Activated CD4-positive, alpha-beta T cell treated with anti-CD3 and anti-CD28 coated beads, Interleukin-2, amount 10 ng/mL, durations not matched to agents 24 days and 14 days (primary cell): ENCODE measurements at regions of chr2 and their contacts with region 1.

Region 1: DNA sequence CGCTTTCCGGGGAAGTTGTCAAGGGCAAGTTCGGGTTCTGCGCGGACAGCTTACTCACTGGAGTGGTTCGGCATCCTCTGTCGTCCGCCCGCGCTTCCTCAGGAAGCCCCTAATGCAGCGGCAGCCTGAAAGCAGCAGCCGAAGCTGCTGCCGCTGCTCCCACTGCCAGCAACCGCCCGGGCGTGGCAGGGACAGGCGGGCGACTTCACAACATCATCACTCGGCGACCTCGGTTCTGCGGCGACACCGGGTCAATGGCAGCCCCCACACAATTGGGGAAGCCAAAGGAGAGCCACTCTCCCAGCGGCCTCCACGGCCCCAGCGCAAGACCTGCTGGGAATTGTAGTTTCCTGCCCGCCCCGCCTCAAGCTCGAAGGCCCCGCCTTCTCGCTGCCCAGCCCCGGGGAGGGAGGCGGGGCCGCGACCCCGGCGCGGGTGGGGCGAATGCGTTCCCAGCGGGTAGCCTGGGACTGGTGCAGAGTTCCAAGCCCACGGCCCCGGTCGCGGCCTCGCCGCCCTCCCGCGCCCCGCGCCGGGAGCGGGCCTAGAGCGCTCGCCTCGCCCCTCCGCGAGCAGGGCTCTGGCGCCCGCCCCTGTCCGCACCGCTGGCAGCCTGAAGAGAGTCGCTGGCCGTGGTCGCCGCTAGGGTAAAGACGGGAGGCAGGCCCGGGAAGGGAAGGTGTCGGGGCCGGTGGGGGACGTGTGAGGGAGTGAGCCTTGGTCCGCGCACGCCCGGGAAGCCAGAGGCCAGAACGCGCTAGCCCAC is at the starts of genes STRADB and TRAK2:
- DNase-seq: peak; percentile 99
- H3K4me3 Mint-ChIP-seq: peak within 1 kb of the TSS; percentile 95
- H3K27ac Mint-ChIP-seq: peak within 1 kb of the TSS; percentile 97
- H3K4me1 Mint-ChIP-seq: peaks cover 42% of the 10 kb centered on the region
- H3K27me3 Mint-ChIP-seq: peaks cover 8% of the 10 kb centered on the region
- total RNA-seq, gene STRADB: 18.5 and 20.1 TPM in 2 replicates
- total RNA-seq, gene TRAK2: 26.5 and 29.1 TPM in 2 replicates

Region 2: GRCh38 chr2:200689115-200689514 is 762.4 kb before region 1 on chr2:
- intact Hi-C with region 1: no loop called
- DNase-seq: no peak
- H3K4me3 Mint-ChIP-seq: no peak overlapping the region
- H3K27ac Mint-ChIP-seq: no peak overlapping the region
- H3K4me1 Mint-ChIP-seq: peaks cover 6% of the 10 kb centered on the region
- H3K27me3 Mint-ChIP-seq: peaks cover 2% of the 10 kb centered on the region

Region 3: GRCh38 chr2:201130524-201131186 is 320.8 kb before region 1 on chr2:
- intact Hi-C with region 1: loop called (anchors 1 kb)
- DNase-seq: peak; percentile 80
- H3K4me3 Mint-ChIP-seq: peak overlapping the region; percentile 81
- H3K27ac Mint-ChIP-seq: peak overlapping the region; percentile 100
- H3K4me1 Mint-ChIP-seq: peaks cover 51% of the 10 kb centered on the region
- H3K27me3 Mint-ChIP-seq: no peaks in the 10 kb centered on the region

Region 4: GRCh38 chr2:201242571-201243277 is 208.8 kb before region 1 on chr2:
- intact Hi-C with region 1: no loop called
- DNase-seq: no peak
- H3K4me3 Mint-ChIP-seq: no peak overlapping the region
- H3K27ac Mint-ChIP-seq: no peak overlapping the region
- H3K4me1 Mint-ChIP-seq: peaks cover 29% of the 10 kb centered on the region
- H3K27me3 Mint-ChIP-seq: no peaks in the 10 kb centered on the region

Region 5: DNA sequence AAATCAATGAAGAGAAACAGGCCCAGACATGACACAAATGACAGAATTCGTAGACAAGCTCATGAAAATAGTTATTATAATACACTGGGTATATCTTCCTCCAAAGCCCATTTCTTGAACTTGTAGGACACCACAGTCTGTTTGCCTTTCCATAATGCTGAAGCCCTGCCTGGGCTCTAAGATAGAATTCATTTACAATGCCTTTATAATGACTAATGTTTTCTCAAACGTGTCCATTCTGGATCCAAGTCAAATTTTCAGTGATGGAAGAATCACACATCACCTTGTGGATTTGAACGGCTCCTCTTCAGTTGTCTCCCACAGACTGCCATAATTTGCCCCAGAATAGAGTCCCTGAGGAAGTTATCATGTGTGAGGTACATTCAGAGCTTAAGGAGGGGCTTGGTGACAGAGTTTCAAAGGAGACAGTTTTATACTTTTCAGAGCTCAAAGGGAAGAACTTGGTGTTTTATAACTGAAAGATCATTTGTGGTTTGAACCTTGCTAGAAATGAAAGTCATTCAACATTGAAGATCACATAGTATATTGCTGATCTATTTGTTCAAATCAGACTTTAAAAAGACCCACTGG is 152.9 kb before region 1 on chr2:
- intact Hi-C with region 1: no loop called
- DNase-seq: no peak
- H3K4me3 Mint-ChIP-seq: no peak overlapping the region
- H3K27ac Mint-ChIP-seq: no peak overlapping the region
- H3K4me1 Mint-ChIP-seq: peaks cover 4% of the 10 kb centered on the region
- H3K27me3 Mint-ChIP-seq: no peaks in the 10 kb centered on the region

Region 6: GRCh38 chr2:201414099-201415023 is 37.1 kb before region 1 on chr2:
- intact Hi-C with region 1: loop called (anchors 2 kb)
- DNase-seq: peak; percentile 64
- H3K4me3 Mint-ChIP-seq: no peak overlapping the region
- H3K27ac Mint-ChIP-seq: no peak overlapping the region
- H3K4me1 Mint-ChIP-seq: peaks cover 5% of the 10 kb centered on the region
- H3K27me3 Mint-ChIP-seq: no peaks in the 10 kb centered on the region

Region 7: DNA sequence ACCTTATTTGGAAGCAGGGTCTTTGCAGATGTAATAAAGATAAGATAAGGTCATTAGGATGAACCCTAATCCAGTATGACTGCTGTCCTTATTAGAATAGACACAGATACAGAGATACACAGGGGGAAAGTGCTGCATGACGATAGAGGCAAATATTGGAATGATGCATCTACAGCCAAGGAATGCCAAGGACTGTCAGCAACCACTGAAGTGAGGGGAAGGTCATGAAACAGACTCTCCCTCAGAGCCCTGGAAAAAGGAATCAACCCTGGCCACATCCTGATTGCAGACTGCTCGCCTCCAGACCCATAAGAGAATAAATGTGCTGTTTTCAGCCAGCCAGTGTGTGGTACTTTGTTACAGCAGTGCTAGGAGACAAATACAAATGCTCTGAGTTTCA is 177.1 kb after region 1 on chr2:
- intact Hi-C with region 1: no loop called
- DNase-seq: peak; percentile 45
- H3K4me3 Mint-ChIP-seq: no peak overlapping the region
- H3K27ac Mint-ChIP-seq: no peak overlapping the region
- H3K4me1 Mint-ChIP-seq: no peaks in the 10 kb centered on the region
- H3K27me3 Mint-ChIP-seq: no peaks in the 10 kb centered on the region

Region 8: DNA sequence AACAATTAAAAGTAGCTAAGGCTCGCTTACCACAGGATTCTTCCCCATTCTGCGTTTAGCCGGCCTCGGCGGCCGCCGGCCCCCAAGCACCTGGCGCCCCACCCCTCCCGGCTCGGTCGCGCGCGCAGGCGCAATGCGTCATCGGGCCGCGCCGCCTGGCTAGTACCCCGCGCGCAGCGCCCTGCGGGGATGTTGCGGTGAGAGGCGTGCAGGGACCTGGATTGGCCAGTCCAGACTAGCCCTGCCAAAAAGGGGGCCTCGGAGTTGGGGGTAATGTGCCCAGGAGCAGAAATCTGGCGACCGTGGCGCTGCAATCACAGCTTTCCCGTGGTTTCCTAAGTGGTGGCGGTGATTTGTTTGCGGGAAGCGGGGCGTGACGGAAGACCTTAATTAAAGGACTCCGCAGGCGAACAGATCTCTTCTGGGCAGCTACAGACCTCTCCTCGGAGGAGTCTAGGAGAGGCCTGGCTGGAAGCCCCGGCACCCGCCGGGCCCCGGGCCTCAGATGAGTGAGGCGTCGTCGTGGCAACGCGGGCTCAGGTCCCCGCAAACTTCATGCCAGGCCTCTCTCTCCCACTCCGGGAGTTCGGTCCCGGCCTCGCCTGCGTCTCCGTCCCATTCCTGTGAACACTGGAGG is 191.2 kb after region 1 on chr2:
- intact Hi-C with region 1: loop called (anchors 1 kb)
- DNase-seq: peak; percentile 97
- H3K4me3 Mint-ChIP-seq: peak overlapping the region; percentile 84
- H3K27ac Mint-ChIP-seq: peak overlapping the region; percentile 87
- H3K4me1 Mint-ChIP-seq: peaks cover 14% of the 10 kb centered on the region
- H3K27me3 Mint-ChIP-seq: peaks cover 3% of the 10 kb centered on the region

Region 9: DNA sequence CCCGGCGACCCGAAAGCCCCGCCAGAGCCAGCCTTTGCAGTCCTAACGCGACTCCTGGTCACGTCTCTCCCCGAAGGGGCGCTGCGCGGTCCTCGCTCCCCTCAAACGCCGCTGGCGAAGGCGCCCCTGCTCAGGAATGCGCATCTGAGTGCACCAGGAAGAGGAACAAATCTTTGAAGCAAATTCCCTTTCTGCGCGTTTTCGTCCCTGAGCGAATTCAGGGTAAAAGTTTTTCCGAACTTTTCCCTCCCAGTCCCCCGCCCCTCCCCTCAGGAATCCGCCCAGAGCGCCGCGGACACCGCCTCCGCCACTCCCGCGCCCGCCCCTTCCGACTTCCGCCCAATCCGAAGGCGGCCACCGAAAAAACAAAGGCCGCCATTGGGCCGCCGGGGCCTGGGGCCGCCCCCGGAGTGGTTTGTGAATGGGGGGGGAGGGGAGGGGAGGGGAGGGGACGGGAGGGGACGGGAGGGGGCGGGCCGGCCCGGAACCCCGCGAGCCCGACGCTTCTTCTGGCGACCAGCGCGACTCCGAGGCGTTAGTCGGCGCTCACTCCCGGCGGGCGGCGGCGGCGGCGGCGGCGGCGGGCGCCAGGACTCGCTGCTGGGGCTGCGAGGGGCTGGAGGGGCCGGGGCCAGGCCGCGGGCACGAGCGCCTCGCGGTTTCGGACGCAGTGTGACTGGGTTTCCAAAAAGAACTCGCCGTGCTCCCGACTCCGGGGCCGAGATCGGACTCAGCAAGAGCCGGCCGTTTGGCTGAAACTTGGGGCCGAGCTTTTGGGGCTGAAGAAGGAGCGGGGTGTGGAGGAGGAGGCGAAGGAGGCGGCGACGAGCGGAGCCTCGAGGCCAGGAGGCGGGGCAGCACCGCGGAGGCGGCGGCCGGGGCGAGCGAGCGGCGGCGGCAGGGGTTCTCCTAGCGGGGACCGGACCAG is 582.1 kb after region 1 on chr2 and contains the start of gene FZD7:
- intact Hi-C with region 1: loop called (anchors 5 kb)
- DNase-seq: peak; percentile 96
- H3K4me3 Mint-ChIP-seq: peak within 1 kb of the TSS; percentile 85
- H3K27ac Mint-ChIP-seq: peak within 1 kb of the TSS; percentile 62
- H3K4me1 Mint-ChIP-seq: peaks cover 12% of the 10 kb centered on the region
- H3K27me3 Mint-ChIP-seq: peaks cover 42% of the 10 kb centered on the region
- total RNA-seq, gene FZD7: 1.3 TPM in 2 replicates